Activated T-helper 1 cell treated with anti-CD3 and anti-CD28 coated beads, Interleukin-12 subunit alpha, Interleukin-12 subunit beta, Interleukin-2, Interleukin-4 antibody, amounts not matched to agents 30 ng/mL and 10 ng/mL and 1 ng/mL, durations not matched to agents 14 hours and 24 hours and 36 hours (primary cell): ENCODE measurements at regions of chr17 and their contacts with region 1.

Region 1: GRCh38 chr17:75412455-75413317 is 7.2 kb upstream of the GRB2 start:
- DNase-seq: peak; percentile 69
- H3K4me3 Mint-ChIP-seq: no peak overlapping the region
- H3K27ac Mint-ChIP-seq: no peak overlapping the region
- H3K4me1 Mint-ChIP-seq: peaks cover 29% of the 10 kb centered on the region
- H3K27me3 Mint-ChIP-seq: peaks cover 10% of the 10 kb centered on the region

Region 2: GRCh38 chr17:75238684-75239191 is 173.9 kb before region 1 on chr17:
- intact Hi-C with region 1: loop called (anchors 1 kb)
- DNase-seq: peak; percentile 35
- H3K4me3 Mint-ChIP-seq: peak overlapping the region; percentile 38
- H3K27ac Mint-ChIP-seq: peak overlapping the region; percentile 76
- H3K4me1 Mint-ChIP-seq: peaks cover 35% of the 10 kb centered on the region
- H3K27me3 Mint-ChIP-seq: no peaks in the 10 kb centered on the region

Region 3: DNA sequence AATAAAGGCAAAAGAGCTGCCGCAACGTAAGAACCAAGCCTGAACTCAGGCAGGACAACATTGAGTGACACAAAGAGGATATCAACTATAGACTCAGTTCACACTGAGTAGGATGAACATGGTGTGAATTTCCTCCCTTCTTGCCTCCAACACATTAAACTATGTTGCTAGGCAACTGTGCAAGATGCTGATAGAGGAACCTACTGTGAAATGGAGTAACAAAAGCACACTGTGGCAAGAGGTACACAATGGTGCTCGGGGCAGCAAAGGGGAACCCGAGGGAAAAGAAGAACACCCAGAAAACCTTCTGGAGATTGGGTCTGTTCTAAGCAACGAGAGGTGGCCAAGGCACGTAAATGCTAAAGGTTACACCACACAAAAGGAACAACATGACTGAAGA is 41.3 kb before region 1 on chr17:
- intact Hi-C with region 1: no loop called
- DNase-seq: no peak
- H3K4me3 Mint-ChIP-seq: peak overlapping the region; percentile 65
- H3K27ac Mint-ChIP-seq: peak overlapping the region; percentile 92
- H3K4me1 Mint-ChIP-seq: peaks cover 60% of the 10 kb centered on the region
- H3K27me3 Mint-ChIP-seq: no peaks in the 10 kb centered on the region

Region 4: GRCh38 chr17:75487351-75488070 is 74.8 kb after region 1 on chr17:
- intact Hi-C with region 1: no loop called
- DNase-seq: peak; percentile 28
- H3K4me3 Mint-ChIP-seq: peak overlapping the region; percentile 49
- H3K27ac Mint-ChIP-seq: peak overlapping the region; percentile 91
- H3K4me1 Mint-ChIP-seq: peaks cover 18% of the 10 kb centered on the region
- H3K27me3 Mint-ChIP-seq: no peaks in the 10 kb centered on the region